ENCODE measurements at regions of chr1 and their contacts with region 1.

Region 1: GRCh38 chr1:172826096-172826743 is 167.3 kb downstream of the FASLG start:
- DNase-seq: peak; percentile 95
- ATAC-seq: peak; percentile 82
- H3K4me3 ChIP-seq: no peak overlapping the region
- H3K27ac ChIP-seq: peak overlapping the region; percentile 76
- H3K4me1 ChIP-seq: peaks cover 11% of the 10 kb centered on the region
- H3K27me3 ChIP-seq: no peaks in the 10 kb centered on the region
- CTCF ChIP-seq: peak; percentile 81
- POLR2A ChIP-seq: peak; percentile 27; the same call in 1 of the 2 replicates
- RAD21 ChIP-seq: peak; percentile 94

Region 2: GRCh38 chr1:171468120-171469035 is 1357.8 kb before region 1 on chr1:
- CTCF ChIA-PET with region 1: no interaction called
- POLR2A ChIA-PET with region 1: no interaction called
- dilution Hi-C with region 1: no loop called
- in situ Hi-C with region 1: no loop called
- intact Hi-C with region 1: no loop called
- DNase-seq: peak; percentile 64
- ATAC-seq: peak; percentile 44
- H3K4me3 ChIP-seq: no peak overlapping the region
- H3K27ac ChIP-seq: no peak overlapping the region
- H3K4me1 ChIP-seq: no peaks in the 10 kb centered on the region
- H3K27me3 ChIP-seq: no peaks in the 10 kb centered on the region
- CTCF ChIP-seq: no peak
- POLR2A ChIP-seq: no peak
- RAD21 ChIP-seq: no peak

Region 3: GRCh38 chr1:172935062-172935592 is 108.9 kb after region 1 on chr1:
- CTCF ChIA-PET with region 1: no interaction called
- POLR2A ChIA-PET with region 1: no interaction called
- dilution Hi-C with region 1: no loop called
- in situ Hi-C with region 1: no loop called
- intact Hi-C with region 1: loop called (anchors 2 kb)
- DNase-seq: peak; percentile 56
- ATAC-seq: no peak
- H3K4me3 ChIP-seq: no peak overlapping the region
- H3K27ac ChIP-seq: peak overlapping the region; percentile 32; the same call in 1 of the 2 replicates
- H3K4me1 ChIP-seq: peaks cover 25% of the 10 kb centered on the region
- H3K27me3 ChIP-seq: no peaks in the 10 kb centered on the region
- CTCF ChIP-seq: no peak
- POLR2A ChIP-seq: no peak
- RAD21 ChIP-seq: no peak

Region 4: DNA sequence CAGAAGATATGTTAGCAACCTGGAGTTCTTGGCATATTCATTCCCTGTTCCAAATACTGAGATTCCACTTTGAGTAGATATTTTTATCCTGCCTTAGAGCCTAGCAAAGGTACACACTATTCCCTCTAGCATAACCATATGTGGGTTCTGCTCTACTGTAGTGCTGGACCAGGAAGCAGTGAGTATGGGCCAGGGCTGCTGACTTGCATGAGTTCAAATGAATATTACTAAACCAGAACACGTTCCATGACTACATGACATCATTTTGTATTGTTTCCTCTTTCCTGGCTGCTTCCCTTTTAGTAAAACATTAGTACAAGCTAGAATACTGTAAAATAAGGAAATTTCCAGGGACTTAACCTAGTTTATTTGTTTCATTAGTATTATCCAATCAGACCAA is 183.4 kb after region 1 on chr1:
- CTCF ChIA-PET with region 1: no interaction called
- POLR2A ChIA-PET with region 1: no interaction called
- dilution Hi-C with region 1: no loop called
- in situ Hi-C with region 1: no loop called
- intact Hi-C with region 1: loop called (anchors 5 kb)
- DNase-seq: no peak
- ATAC-seq: no peak
- H3K4me3 ChIP-seq: no peak overlapping the region
- H3K27ac ChIP-seq: no peak overlapping the region
- H3K4me1 ChIP-seq: no peaks in the 10 kb centered on the region
- H3K27me3 ChIP-seq: no peaks in the 10 kb centered on the region
- CTCF ChIP-seq: no peak
- POLR2A ChIP-seq: no peak
- RAD21 ChIP-seq: no peak

Region 5: GRCh38 chr1:173122958-173123852 is 297.0 kb after region 1 on chr1:
- CTCF ChIA-PET with region 1: no interaction called
- POLR2A ChIA-PET with region 1: interaction called, 4 read pairs
- dilution Hi-C with region 1: no loop called
- in situ Hi-C with region 1: no loop called
- intact Hi-C with region 1: loop called (anchors 1 kb)
- DNase-seq: peak; percentile 95
- ATAC-seq: peak; percentile 85
- H3K4me3 ChIP-seq: peak overlapping the region; percentile 27
- H3K27ac ChIP-seq: peak overlapping the region; percentile 87
- H3K4me1 ChIP-seq: peaks cover 8% of the 10 kb centered on the region
- H3K27me3 ChIP-seq: no peaks in the 10 kb centered on the region
- CTCF ChIP-seq: no peak
- POLR2A ChIP-seq: no peak
- RAD21 ChIP-seq: peak; percentile 9; the same call in 1 of the 2 replicates

Region 6: DNA sequence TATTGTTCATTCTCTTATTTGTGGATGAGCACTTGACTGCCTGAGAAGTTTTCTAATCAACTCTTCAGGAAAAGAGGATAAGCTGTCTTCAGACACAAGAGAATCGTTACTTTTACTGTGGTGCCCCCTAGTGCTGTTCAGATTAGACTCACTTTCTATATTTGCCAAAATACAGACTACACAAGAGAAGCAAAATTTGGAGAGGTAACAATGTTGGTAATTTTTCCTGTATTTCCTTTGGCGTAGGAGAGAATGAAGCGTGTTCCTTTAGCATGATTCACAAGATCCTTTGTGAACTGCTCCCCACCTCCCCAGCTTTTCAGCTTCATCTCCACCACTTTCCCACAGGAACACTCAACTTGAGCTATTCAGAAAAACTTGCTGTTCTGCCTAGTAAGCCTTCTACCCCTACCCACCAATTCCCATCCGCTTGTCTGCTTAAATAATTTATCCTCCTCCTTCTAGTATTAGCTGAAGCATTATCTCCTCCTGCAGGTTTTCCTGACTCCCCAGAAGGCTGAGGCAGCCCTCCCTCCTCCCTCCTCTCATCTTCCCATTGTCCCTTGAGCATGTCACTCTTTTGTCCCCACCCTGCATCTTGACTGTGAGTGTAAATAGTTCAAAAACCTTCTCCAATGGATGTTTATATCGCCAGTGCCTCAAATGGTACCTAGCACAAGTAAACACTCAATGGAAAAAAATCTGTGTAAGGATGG is 376.4 kb after region 1 on chr1:
- CTCF ChIA-PET with region 1: interaction called, 35 read pairs
- POLR2A ChIA-PET with region 1: no interaction called
- dilution Hi-C with region 1: no loop called
- in situ Hi-C with region 1: loop called (anchors 5 kb)
- intact Hi-C with region 1: loop called (anchors 1 kb)
- DNase-seq: peak; percentile 95
- ATAC-seq: peak; percentile 68
- H3K4me3 ChIP-seq: no peak overlapping the region
- H3K27ac ChIP-seq: peak overlapping the region; percentile 36; the same call in 1 of the 2 replicates
- H3K4me1 ChIP-seq: peaks cover 14% of the 10 kb centered on the region
- H3K27me3 ChIP-seq: no peaks in the 10 kb centered on the region
- CTCF ChIP-seq: peak; percentile 87
- POLR2A ChIP-seq: no peak; the same call in 1 of the 2 replicates
- RAD21 ChIP-seq: peak; percentile 94

Region 7: GRCh38 chr1:173429471-173430402 is 603.5 kb after region 1 on chr1:
- CTCF ChIA-PET with region 1: no interaction called
- POLR2A ChIA-PET with region 1: no interaction called
- dilution Hi-C with region 1: no loop called
- in situ Hi-C with region 1: no loop called
- intact Hi-C with region 1: loop called (anchors 5 kb)
- DNase-seq: peak; percentile 96
- ATAC-seq: peak; percentile 97
- H3K4me3 ChIP-seq: peak overlapping the region; percentile 21; the same call in 1 of the 2 replicates
- H3K27ac ChIP-seq: peak overlapping the region; percentile 74
- H3K4me1 ChIP-seq: peaks cover 5% of the 10 kb centered on the region; the same call in 1 of the 2 replicates
- H3K27me3 ChIP-seq: no peaks in the 10 kb centered on the region
- CTCF ChIP-seq: peak; percentile 58
- POLR2A ChIP-seq: no peak
- RAD21 ChIP-seq: peak; percentile 44